Activated naive CD4-positive, alpha-beta T cell treated with anti-CD3 and anti-CD28 coated beads, Interleukin-2, amount 10 ng/mL, durations not matched to agents 7 days and 5 days (primary cell): ENCODE measurements at regions of chr9 and their contacts with region 1.

Region 1: GRCh38 chr9:77433675-77434445 is 214.3 kb downstream of the GNA14 start:
- DNase-seq: peak; percentile 64
- H3K4me3 Mint-ChIP-seq: no peak overlapping the region
- H3K27ac Mint-ChIP-seq: no peak overlapping the region
- H3K4me1 Mint-ChIP-seq: peaks cover 3% of the 10 kb centered on the region
- H3K27me3 Mint-ChIP-seq: peaks cover 7% of the 10 kb centered on the region

Region 2: GRCh38 chr9:77038281-77039036 is 395.4 kb before region 1 on chr9:
- CTCF ChIA-PET with region 1: no interaction called
- DNase-seq: no peak
- H3K4me3 Mint-ChIP-seq: no peak overlapping the region
- H3K27ac Mint-ChIP-seq: no peak overlapping the region
- H3K4me1 Mint-ChIP-seq: no peaks in the 10 kb centered on the region
- H3K27me3 Mint-ChIP-seq: peaks cover 3% of the 10 kb centered on the region

Region 3: GRCh38 chr9:77085423-77085822 is 348.4 kb before region 1 on chr9:
- CTCF ChIA-PET with region 1: no interaction called
- DNase-seq: no peak
- H3K4me3 Mint-ChIP-seq: no peak overlapping the region
- H3K27ac Mint-ChIP-seq: no peak overlapping the region
- H3K4me1 Mint-ChIP-seq: no peaks in the 10 kb centered on the region
- H3K27me3 Mint-ChIP-seq: peaks cover 4% of the 10 kb centered on the region

Region 4: GRCh38 chr9:77488439-77489126 is 54.7 kb after region 1 on chr9:
- CTCF ChIA-PET with region 1: interaction called, 57 read pairs
- DNase-seq: no peak
- H3K4me3 Mint-ChIP-seq: peak overlapping the region; percentile 62
- H3K27ac Mint-ChIP-seq: no peak overlapping the region
- H3K4me1 Mint-ChIP-seq: peaks cover 16% of the 10 kb centered on the region
- H3K27me3 Mint-ChIP-seq: peaks cover 13% of the 10 kb centered on the region

Region 5: GRCh38 chr9:77751341-77752091 is 317.7 kb after region 1 on chr9:
- CTCF ChIA-PET with region 1: interaction called, 34 read pairs
- DNase-seq: no peak
- H3K4me3 Mint-ChIP-seq: no peak overlapping the region
- H3K27ac Mint-ChIP-seq: no peak overlapping the region
- H3K4me1 Mint-ChIP-seq: peaks cover 14% of the 10 kb centered on the region
- H3K27me3 Mint-ChIP-seq: no peaks in the 10 kb centered on the region